ENCODE measurements at regions of chr16 and their contacts with region 1.

Region 1: DNA sequence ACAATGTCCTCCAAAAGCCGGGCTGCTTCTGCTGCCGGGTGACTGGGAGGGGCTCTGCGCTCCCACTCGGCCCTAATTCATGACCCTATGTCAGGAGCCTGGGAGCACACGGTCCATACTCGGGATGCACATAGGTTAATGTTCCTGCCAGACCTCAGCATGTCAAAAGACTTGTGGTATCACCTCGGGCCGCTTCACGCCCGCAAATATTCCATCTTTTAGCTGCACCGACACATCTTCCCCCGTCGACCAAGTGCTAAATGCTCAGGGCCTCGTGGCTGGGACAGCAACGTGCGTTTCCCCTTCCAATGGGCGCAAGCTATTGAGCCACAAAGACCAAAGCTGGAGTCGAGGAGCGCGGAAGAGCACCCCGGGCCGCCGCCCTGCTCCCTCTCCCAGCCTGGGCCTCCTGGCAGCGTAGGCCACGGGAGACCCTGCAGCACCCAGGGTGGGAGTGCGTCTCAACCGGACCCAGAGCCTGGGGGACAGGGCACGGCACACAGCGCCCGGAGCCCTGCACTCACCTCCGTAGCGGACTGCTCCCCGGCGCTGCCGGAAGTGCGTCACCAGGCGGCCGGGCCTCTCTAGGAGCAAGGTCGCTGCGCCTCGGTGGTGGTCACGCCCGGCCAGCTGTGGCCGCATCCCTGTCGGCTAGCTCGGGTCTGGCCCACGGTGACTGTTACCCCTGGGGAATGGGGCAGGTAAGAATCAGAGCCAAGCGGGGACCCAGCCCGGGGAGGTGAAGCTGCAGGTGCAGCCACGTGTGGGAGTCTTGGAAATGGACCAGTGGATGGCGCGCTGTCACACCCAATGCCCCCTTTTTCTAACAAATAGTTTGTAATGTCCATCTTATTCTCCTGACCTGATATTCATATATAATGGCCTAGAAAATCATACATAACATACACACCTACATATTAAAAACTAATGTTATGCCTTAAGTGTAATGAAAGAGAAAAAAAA is at the start of gene ZNF23:
- DNase-seq: peak; percentile 98
- H3K4me3 ChIP-seq: peak within 1 kb of the TSS; percentile 63 to 88 (median 72)
- H3K27ac ChIP-seq: peak within 1 kb of the TSS; percentile 85 to 93 (median 89)
- H3K4me1 ChIP-seq: peaks cover 11 to 28% (median 21%) of the 10 kb centered on the region in 6 donors
- H3K27me3 ChIP-seq: no peaks in the 10 kb centered on the region
- CTCF ChIP-seq: peak in 1 of 11 experiments; percentile 27
- POLR2A ChIP-seq: peak in 1 of 3 donors; percentile 33
- total RNA-seq, gene ZNF23: 6.3 to 12.4 (median 8.8) TPM

Region 2: GRCh38 chr16:71358464-71358998 is 103.4 kb before region 1 on chr16 and contains the start of gene CALB2:
- intact Hi-C with region 1: no loop called
- DNase-seq: peak; percentile 86
- H3K4me3 ChIP-seq: peak within 1 kb of the TSS in 2 of 8 donors; percentile 20 to 58
- H3K27ac ChIP-seq: no peak within 1 kb of the TSS
- H3K4me1 ChIP-seq: peaks cover 3 to 17% (median 10%) of the 10 kb centered on the region in 6 donors
- H3K27me3 ChIP-seq: peaks cover 0 to 70% (median 25%) of the 10 kb centered on the region in 7 donors
- CTCF ChIP-seq: peak in 10 of 11 experiments; percentile 32 to 98 (median 92)
- POLR2A ChIP-seq: no peak
- total RNA-seq, gene CALB2: not detected

Region 3: DNA sequence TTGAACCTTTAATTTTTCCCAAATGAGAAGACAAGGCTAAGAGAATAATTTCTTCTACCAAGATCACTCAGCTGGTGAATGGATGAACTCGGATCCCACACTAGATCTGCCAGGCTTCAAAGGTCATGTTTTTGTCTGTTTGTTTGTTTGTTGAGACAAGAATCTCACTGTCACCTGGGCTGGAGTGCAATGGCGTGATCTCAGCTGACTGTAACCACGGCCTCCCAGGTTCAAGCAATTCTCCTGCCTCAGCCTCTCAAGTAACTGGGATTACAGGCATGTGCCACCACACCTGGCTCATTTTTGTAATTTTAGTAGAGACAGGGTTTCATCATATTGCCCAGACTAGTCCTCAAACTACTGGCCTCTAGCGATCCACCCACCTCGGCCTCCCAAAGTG is 20.6 kb after region 1 on chr16:
- intact Hi-C with region 1: loop called (anchors 2 kb)
- DNase-seq: no peak
- H3K4me3 ChIP-seq: no peak overlapping the region
- H3K27ac ChIP-seq: no peak overlapping the region
- H3K4me1 ChIP-seq: peaks cover 0 to 28% (median 13%) of the 10 kb centered on the region in 6 donors
- H3K27me3 ChIP-seq: no peaks in the 10 kb centered on the region
- CTCF ChIP-seq: no peak
- POLR2A ChIP-seq: no peak

Measured in spleen (tissue), 13 donors.